CD4-positive, alpha-beta memory T cell (primary cell): ENCODE measurements at regions of chr17 and their contacts with region 1.

Region 1: GRCh38 chr17:82320956-82321927 is 3.8 kb upstream of the CD7 start:
- DNase-seq: peak; percentile 79 to 96 (median 83)
- H3K4me3 ChIP-seq: peak overlapping the region in 1 of 2 donors; percentile 47
- H3K4me3 Mint-ChIP-seq: peak overlapping the region; percentile 60 to 88 (median 82)
- H3K27ac ChIP-seq: peak overlapping the region; percentile 66
- H3K27ac Mint-ChIP-seq: peak overlapping the region in 6 of 7 donors; percentile 86 to 96 (median 94)
- H3K4me1 ChIP-seq: peaks cover 41% of the 10 kb centered on the region
- H3K4me1 Mint-ChIP-seq: peaks cover 9 to 31% (median 21%) of the 10 kb centered on the region in 4 donors
- H3K27me3 ChIP-seq: no peaks in the 10 kb centered on the region
- H3K27me3 Mint-ChIP-seq: peaks cover 0 to 2% of the 10 kb centered on the region in 2 donors

Region 2: GRCh38 chr17:81842725-81843504 is 478.3 kb before region 1 on chr17:
- CTCF ChIA-PET with region 1: no interaction called
- POLR2A ChIA-PET with region 1: no interaction called
- intact Hi-C with region 1: no loop called
- DNase-seq: no peak
- H3K4me3 ChIP-seq: no peak overlapping the region
- H3K4me3 Mint-ChIP-seq: no peak overlapping the region
- H3K27ac ChIP-seq: no peak overlapping the region
- H3K27ac Mint-ChIP-seq: no peak overlapping the region
- H3K4me1 ChIP-seq: no peaks in the 10 kb centered on the region
- H3K4me1 Mint-ChIP-seq: peaks cover 0 to under 1% (median 0%) of the 10 kb centered on the region in 4 donors
- H3K27me3 ChIP-seq: no peaks in the 10 kb centered on the region
- H3K27me3 Mint-ChIP-seq: no peaks in the 10 kb centered on the region

Region 3: GRCh38 chr17:82205719-82206508 is 115.3 kb before region 1 on chr17:
- CTCF ChIA-PET with region 1: interaction called, 9 read pairs
- POLR2A ChIA-PET with region 1: no interaction called
- intact Hi-C with region 1: loop called (anchors 1 kb)
- DNase-seq: peak; percentile 84 to 87 (median 86)
- H3K4me3 ChIP-seq: no peak overlapping the region
- H3K4me3 Mint-ChIP-seq: peak overlapping the region in 7 of 8 donors; percentile 39 to 81 (median 54)
- H3K27ac ChIP-seq: peak overlapping the region; percentile 61
- H3K27ac Mint-ChIP-seq: peak overlapping the region; percentile 96 to 99 (median 97)
- H3K4me1 ChIP-seq: peaks cover 26% of the 10 kb centered on the region
- H3K4me1 Mint-ChIP-seq: peaks cover 20 to 46% (median 33%) of the 10 kb centered on the region in 4 donors
- H3K27me3 ChIP-seq: no peaks in the 10 kb centered on the region
- H3K27me3 Mint-ChIP-seq: no peaks in the 10 kb centered on the region

Region 4: GRCh38 chr17:82244413-82245140 is 76.7 kb before region 1 on chr17:
- CTCF ChIA-PET with region 1: interaction called, 10 read pairs
- POLR2A ChIA-PET with region 1: interaction called, 5 read pairs
- intact Hi-C with region 1: loop called (anchors 1 kb)
- DNase-seq: no peak
- H3K4me3 ChIP-seq: no peak overlapping the region
- H3K4me3 Mint-ChIP-seq: peak overlapping the region in 2 of 8 donors; percentile 28 to 63
- H3K27ac ChIP-seq: no peak overlapping the region
- H3K27ac Mint-ChIP-seq: peak overlapping the region in 6 of 7 donors; percentile 47 to 76 (median 67)
- H3K4me1 ChIP-seq: peaks cover 38% of the 10 kb centered on the region
- H3K4me1 Mint-ChIP-seq: peaks cover 20 to 80% (median 37%) of the 10 kb centered on the region in 4 donors
- H3K27me3 ChIP-seq: no peaks in the 10 kb centered on the region
- H3K27me3 Mint-ChIP-seq: no peaks in the 10 kb centered on the region

Region 5: DNA sequence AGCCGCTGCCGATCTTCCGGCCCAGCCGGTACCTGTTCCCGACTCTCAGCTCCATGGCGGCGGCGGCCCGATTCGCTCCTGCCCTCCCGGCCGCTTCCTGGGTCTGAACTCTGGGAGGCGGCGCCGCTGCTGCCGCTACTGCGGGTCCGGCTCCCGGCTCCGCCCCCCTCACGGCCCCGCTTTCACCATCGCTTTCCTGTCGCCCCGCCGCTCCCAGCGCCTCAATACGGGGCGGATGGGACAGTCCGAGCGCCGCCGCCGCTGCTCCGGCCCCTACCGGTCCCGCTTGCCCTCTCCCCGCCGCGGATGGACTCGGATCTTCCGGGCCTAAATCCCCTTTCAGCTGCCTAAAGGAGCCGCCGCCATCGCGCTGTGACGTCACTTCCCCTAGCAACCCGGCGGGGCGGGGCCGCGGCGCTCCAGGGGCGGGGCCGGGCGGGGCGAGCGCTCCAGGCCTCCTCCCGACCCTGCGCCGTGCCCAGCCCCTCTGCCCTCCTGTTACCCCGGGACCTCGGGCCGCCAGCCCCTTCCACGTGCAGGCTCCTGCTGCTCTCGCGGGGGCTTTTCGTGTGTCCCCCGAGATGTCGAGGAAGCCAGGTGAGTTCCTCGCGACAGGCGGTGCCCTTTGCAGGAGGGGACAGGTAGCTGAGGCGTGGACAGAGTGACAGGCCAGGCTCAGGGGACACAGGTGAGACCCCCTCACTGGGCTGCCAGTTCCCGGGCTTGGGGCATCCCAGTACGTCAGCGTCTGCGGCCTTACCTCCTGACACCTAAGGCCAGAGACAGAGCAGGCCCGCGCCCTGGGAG is 47.7 kb before region 1 on chr17 and contains the start of gene CSNK1D:
- CTCF ChIA-PET with region 1: no interaction called
- POLR2A ChIA-PET with region 1: interaction called, 15 read pairs
- intact Hi-C with region 1: loop called (anchors 1 kb)
- DNase-seq: peak; percentile 88 to 94 (median 90)
- H3K4me3 ChIP-seq: peak within 1 kb of the TSS; percentile 47 to 76
- H3K4me3 Mint-ChIP-seq: peak within 1 kb of the TSS; percentile 91 to 96 (median 94)
- H3K27ac ChIP-seq: peak within 1 kb of the TSS; percentile 80
- H3K27ac Mint-ChIP-seq: peak within 1 kb of the TSS; percentile 92 to 100 (median 98)
- H3K4me1 ChIP-seq: peaks cover 50% of the 10 kb centered on the region
- H3K4me1 Mint-ChIP-seq: peaks cover 31 to 53% (median 40%) of the 10 kb centered on the region in 4 donors
- H3K27me3 ChIP-seq: no peaks in the 10 kb centered on the region
- H3K27me3 Mint-ChIP-seq: no peaks in the 10 kb centered on the region
- total RNA-seq, gene CSNK1D: 182 TPM

Region 6: DNA sequence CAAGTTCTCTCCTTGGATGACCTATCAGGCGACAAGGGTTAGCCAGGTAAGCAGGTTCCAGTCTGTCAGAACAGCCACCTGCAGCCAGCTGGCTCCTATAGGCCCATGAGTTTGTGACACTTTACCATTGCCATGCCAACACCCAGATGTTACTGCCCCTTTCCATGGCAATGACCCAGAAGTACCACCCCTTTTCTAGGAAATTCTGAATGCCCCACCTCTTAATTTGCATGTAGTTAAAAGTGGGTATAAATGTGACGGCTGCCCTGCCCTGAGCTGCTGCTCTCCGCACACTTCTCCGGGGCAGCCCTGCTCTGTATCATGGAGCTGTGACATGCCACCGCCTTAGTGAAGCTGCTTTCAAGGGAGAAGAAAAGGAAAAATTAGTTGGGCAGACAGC is 22.3 kb after region 1 on chr17:
- CTCF ChIA-PET with region 1: no interaction called
- POLR2A ChIA-PET with region 1: no interaction called
- intact Hi-C with region 1: no loop called
- DNase-seq: no peak
- H3K4me3 ChIP-seq: no peak overlapping the region
- H3K4me3 Mint-ChIP-seq: no peak overlapping the region
- H3K27ac ChIP-seq: no peak overlapping the region
- H3K27ac Mint-ChIP-seq: no peak overlapping the region
- H3K4me1 ChIP-seq: peaks cover 6% of the 10 kb centered on the region
- H3K4me1 Mint-ChIP-seq: peaks cover 6 to 11% (median 8%) of the 10 kb centered on the region in 4 donors
- H3K27me3 ChIP-seq: no peaks in the 10 kb centered on the region
- H3K27me3 Mint-ChIP-seq: peaks cover 0 to under 1% of the 10 kb centered on the region in 2 donors

Region 7: DNA sequence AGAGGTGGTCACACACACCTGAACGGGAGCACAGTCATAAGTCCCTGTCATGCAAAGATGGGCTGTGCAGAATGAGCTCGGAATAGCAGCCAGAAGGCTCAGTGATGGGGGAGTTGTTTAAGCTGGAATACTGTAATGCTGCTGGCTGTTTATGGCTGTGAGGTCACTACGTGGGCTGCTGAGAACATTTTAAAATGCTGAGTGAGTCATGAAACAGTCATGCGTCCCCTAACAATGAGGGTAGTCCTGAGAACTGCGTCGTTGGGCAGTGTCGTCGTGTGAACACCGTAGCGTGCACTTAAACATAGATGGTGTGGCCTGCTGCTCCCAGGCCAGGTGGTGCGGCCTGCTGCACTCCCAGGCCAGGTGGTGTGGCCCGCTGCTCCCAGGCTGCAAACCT is 470.3 kb after region 1 on chr17:
- CTCF ChIA-PET with region 1: no interaction called
- POLR2A ChIA-PET with region 1: no interaction called
- intact Hi-C with region 1: no loop called
- DNase-seq: no peak
- H3K4me3 ChIP-seq: no peak overlapping the region
- H3K4me3 Mint-ChIP-seq: no peak overlapping the region
- H3K27ac ChIP-seq: no peak overlapping the region
- H3K27ac Mint-ChIP-seq: peak overlapping the region in 1 of 7 donors; percentile 41
- H3K4me1 ChIP-seq: no peaks in the 10 kb centered on the region
- H3K4me1 Mint-ChIP-seq: peaks cover 0 to 4% (median 0%) of the 10 kb centered on the region in 4 donors
- H3K27me3 ChIP-seq: no peaks in the 10 kb centered on the region
- H3K27me3 Mint-ChIP-seq: no peaks in the 10 kb centered on the region